Head of caudate nucleus (tissue), 42 donors: ENCODE measurements at regions of chr22 and their contacts with region 1.

Region 1: DNA sequence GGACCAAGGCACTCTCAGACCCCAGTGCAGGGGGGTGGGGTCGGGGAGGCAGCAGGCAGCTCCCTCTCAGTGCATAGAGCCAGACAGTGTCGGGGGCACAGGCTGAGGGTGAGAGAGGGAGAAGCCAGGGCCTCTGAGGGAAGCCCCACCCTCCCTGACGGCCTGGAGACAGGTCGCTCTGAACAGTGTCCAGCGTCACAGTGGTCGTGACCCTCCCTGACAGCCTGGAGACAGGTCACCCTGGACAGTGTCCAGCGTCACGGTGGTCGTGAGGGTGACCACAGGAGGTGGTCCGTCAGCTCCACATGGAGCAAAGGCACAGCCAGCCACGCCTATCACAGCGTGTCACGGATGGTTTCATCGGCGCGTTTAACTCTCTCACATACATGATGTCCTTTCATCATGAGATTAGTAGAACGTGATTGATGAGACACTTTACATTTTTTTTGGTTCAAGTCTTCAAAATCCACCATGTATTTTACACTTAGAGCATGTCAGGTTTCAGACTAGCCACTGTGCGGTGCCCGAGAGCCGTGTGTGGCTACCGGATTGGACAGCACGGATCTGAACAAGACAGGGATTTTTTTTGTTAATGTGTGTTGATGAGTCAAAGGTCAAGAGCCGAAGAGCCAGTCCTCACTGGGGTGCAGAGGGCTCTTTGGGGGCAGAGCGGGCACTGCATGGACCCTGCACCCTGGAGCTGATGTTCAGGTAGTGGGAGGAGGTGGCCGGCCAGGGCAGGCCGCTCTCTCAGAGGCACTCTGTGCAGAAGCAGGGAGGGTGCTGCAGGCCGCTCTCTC is 23.9 kb upstream of the PANX2 start:
- DNase-seq: peak in 41 of 42 donors; percentile 55 to 86 (median 73)

Region 2: DNA sequence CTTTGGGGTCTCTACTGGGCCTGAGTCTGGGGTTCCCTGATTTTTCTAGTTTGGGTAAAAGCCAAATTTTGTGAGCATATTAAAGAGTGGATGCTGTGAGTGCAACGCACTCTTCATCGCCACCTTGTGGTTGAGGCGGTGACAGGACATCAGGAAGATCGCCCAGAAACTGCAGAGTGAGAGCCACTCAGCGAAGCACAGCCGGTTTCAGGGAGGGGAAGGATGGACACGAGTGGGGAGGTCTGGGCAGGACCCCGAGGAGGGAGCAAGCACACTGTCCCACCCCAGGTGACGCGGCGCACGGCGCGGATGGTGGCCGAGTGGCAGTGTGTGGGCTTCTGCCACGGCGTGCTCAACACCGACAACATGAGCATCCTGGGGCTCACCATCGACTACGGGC is 63.3 kb after region 1 on chr22:
- intact Hi-C with region 1: loop called (anchors 2 kb)
- DNase-seq: peak in 40 of 42 donors; percentile 45 to 87 (median 71)